Activated B cell treated with CpG ODN at 0.5 μM for 24 hours (primary cell): ENCODE measurements at regions of chr20 and their contacts with region 1.

Region 1: GRCh38 chr20:13105864-13106457 is 97.2 kb downstream of the SPTLC3 start:
- DNase-seq: no peak
- ATAC-seq: no peak
- H3K4me3 Mint-ChIP-seq: no peak overlapping the region
- H3K27ac Mint-ChIP-seq: no peak overlapping the region
- H3K4me1 Mint-ChIP-seq: no peaks in the 10 kb centered on the region
- H3K27me3 Mint-ChIP-seq: peaks cover 3% of the 10 kb centered on the region
- CTCF ChIP-seq: peak; percentile 81

Region 2: DNA sequence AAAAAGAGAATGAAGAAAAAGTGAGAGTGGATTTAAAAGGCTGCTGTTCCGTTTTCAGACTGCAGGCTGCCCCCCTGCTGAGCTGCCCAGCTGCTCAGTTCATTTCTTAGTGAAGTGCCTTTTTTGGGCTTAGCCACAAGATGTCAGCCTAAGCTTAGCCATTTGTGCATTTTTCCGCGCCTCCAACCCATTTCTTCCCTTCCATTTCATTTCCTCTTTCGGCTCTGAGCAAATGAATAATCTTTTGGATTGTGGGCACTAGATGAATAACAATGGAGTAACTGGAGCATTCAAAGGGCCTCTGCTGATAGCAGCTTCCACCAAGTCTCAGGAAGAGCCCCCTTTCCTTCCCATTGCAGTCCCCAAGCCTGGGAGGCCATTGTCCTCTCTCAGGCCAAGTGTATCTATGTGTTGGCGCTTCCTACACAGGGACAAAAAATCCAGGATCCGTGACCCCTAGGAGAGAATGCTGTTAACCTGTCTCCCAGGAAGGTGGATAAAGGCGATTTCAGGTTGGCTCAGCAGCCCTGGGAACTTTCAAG is 180.7 kb before region 1 on chr20:
- CTCF ChIA-PET with region 1: no interaction called
- POLR2A ChIA-PET with region 1: no interaction called
- intact Hi-C with region 1: loop called (anchors 1 kb)
- DNase-seq: no peak
- ATAC-seq: peak; percentile 25
- H3K4me3 Mint-ChIP-seq: no peak overlapping the region
- H3K27ac Mint-ChIP-seq: no peak overlapping the region
- H3K4me1 Mint-ChIP-seq: no peaks in the 10 kb centered on the region
- H3K27me3 Mint-ChIP-seq: no peaks in the 10 kb centered on the region
- CTCF ChIP-seq: no peak

Region 3: GRCh38 chr20:13492001-13492481 is 386.1 kb after region 1 on chr20:
- CTCF ChIA-PET with region 1: no interaction called
- POLR2A ChIA-PET with region 1: no interaction called
- intact Hi-C with region 1: no loop called
- DNase-seq: no peak
- ATAC-seq: no peak
- H3K4me3 Mint-ChIP-seq: no peak overlapping the region
- H3K27ac Mint-ChIP-seq: no peak overlapping the region
- H3K4me1 Mint-ChIP-seq: no peaks in the 10 kb centered on the region
- H3K27me3 Mint-ChIP-seq: no peaks in the 10 kb centered on the region
- CTCF ChIP-seq: no peak